Activated CD4-positive, alpha-beta T cell treated with anti-CD3 and anti-CD28 coated beads for 36 hours (primary cell): ENCODE measurements at regions of chrX and their contacts with region 1.

Region 1: DNA sequence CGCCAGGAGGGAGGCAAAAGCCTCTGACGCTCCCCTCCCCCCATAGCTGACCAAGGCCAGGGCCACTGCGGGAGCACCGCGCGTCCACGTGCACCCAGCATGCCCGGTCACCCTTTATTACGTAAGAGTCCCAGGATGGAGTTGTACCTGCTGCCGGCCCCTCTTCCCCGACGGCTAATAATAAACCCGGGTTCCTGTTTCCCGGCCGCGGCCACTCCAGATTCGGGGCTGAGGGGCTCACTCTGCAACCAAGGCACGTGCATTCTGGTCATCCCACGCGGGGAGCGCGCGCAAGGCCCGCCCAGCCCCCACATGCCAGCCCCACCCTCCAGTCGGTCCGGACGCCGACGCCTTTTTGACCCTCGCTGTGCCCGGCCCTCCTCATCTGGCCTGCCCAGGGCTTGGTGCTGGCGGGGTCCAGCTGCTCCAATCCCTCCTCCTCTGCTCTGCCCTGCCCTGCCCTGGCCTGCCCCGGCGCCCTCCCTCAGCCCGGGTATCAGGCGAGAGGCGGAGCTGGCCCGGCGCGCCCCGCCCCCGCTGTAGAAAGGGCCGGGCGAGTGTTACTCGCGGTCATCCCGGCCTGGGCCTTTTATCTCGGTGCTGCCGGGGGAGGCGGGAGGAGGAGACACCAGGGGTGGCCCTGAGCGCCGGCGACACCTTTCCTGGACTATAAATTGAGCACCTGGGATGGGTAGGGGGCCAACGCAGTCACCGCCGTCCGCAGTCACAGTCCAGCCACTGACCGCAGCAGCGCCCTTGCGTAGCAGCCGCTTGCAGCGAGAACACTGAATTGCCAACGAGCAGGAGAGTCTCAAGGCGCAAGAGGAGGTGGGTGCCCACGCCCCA is 2.5 kb downstream of the MID1IP1 start:
- DNase-seq: peak; percentile 87
- ATAC-seq: peak; percentile 68
- H3K4me3 Mint-ChIP-seq: peak overlapping the region; percentile 95
- H3K27ac Mint-ChIP-seq: peak overlapping the region; percentile 96
- H3K4me1 Mint-ChIP-seq: peaks cover 15% of the 10 kb centered on the region
- H3K27me3 Mint-ChIP-seq: no peaks in the 10 kb centered on the region

Region 2: DNA sequence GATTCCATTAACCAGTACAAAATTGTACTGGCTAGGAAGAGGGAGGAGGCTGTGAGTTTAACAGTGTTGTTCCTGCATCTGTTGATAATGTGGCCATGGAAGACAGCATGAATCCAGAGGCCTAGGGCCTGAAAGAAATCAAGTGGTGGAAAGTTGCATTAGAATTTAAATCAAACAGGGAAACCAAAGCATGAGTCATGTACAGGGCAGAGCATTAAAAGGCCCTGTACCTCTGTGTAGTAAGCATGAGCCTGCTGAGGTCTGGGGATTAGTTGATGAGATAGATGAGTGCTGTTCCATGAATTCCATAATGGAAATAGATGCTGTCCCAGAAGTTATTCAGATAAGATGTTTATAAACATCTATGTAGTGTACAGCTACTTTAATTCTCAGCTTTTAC is 55.8 kb after region 1 on chrX:
- CTCF ChIA-PET with region 1: no interaction called
- POLR2A ChIA-PET with region 1: no interaction called
- intact Hi-C with region 1: loop called (anchors 2 to 5 kb)
- DNase-seq: no peak
- ATAC-seq: peak; percentile 63
- H3K4me3 Mint-ChIP-seq: no peak overlapping the region
- H3K27ac Mint-ChIP-seq: no peak overlapping the region
- H3K4me1 Mint-ChIP-seq: peaks cover 6% of the 10 kb centered on the region
- H3K27me3 Mint-ChIP-seq: no peaks in the 10 kb centered on the region

Region 3: DNA sequence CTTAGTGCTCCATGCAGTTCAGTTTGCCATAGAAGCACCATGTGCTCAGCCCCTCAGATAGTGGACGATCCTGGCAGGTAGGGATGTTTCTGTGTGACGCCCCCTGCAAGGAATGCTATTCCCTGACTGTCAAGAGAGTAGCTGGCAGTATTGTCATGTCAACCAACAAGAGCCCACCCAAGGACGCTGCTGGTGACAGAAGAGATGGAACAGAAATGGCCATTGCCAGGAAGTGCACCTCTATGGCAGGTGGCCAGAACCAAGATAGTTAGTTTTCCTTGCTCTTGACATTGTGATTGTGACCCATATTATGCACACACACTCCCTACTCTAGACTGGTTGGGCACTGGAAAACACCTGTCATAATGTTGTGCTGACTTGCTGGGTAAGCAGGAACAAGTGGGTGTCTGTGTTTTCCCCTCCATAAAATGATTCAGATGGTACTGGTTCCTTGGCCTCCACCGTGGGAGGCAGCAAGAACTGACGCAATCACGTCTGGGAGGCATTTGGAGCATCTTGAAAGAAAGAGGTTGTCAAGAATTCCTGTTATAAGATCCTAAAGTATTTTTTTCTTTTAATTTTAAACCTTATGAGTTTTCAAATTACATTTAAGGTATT is 505.3 kb after region 1 on chrX:
- CTCF ChIA-PET with region 1: no interaction called
- POLR2A ChIA-PET with region 1: no interaction called
- intact Hi-C with region 1: loop called (anchors 5 kb)
- DNase-seq: peak; percentile 77
- ATAC-seq: peak; percentile 86
- H3K4me3 Mint-ChIP-seq: peak overlapping the region; percentile 51
- H3K27ac Mint-ChIP-seq: peak overlapping the region; percentile 100
- H3K4me1 Mint-ChIP-seq: peaks cover 77% of the 10 kb centered on the region
- H3K27me3 Mint-ChIP-seq: no peaks in the 10 kb centered on the region

Region 4: GRCh38 chrX:39772057-39772832 is 968.4 kb after region 1 on chrX:
- CTCF ChIA-PET with region 1: no interaction called
- POLR2A ChIA-PET with region 1: no interaction called
- intact Hi-C with region 1: loop called in 1 of 2 experiments (anchors 5 kb)
- DNase-seq: peak; percentile 84
- ATAC-seq: peak; percentile 71
- H3K4me3 Mint-ChIP-seq: peak overlapping the region; percentile 39
- H3K27ac Mint-ChIP-seq: peak overlapping the region; percentile 94
- H3K4me1 Mint-ChIP-seq: peaks cover 42% of the 10 kb centered on the region
- H3K27me3 Mint-ChIP-seq: no peaks in the 10 kb centered on the region

Region 5: DNA sequence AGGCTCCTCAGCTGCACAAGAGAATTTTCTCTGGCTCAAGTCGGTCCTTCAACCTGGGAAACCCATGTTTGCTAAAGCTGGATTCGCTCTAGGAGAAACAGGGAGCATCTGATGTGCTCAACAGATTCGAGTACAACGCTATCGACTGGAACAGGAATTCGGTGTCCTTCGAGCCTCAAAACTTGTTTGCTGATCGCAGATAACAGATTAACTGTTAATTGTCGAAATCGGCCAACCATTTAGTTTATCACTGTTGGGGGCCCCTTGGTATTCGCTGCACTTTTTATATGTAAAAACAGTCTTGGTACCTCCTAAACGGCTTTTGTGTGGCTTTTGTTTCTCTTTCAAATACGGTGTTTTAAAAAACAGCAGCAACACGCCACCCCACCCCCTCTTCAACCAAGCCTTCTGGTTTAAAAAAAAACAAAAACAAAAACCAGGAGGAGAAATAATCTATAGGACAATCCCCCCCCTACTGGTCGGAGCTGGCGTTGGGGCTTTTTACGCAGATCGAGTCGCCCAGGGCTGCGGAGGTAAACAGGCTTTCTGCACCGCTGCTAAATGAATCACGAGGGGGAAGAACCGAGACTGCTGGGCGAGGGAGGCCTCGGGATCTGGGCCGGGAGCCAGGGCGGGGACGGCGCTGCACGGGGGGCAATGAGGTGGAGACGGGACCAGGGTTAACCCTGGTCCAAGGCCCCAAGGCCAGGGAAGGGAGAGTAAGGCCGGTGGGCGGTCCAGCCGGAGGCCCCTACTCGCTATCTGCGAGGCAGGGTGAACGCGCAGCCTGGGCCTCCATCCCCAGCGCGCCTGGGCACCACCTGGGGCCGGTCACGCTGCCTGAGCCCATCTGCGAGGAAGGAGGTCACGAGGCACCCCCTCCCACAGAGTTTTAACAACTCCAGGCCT is 1365.6 kb after region 1 on chrX:
- CTCF ChIA-PET with region 1: no interaction called
- POLR2A ChIA-PET with region 1: no interaction called
- intact Hi-C with region 1: loop called in 1 of 2 experiments (anchors 1 kb)
- DNase-seq: peak; percentile 89
- ATAC-seq: peak; percentile 67
- H3K4me3 Mint-ChIP-seq: peak overlapping the region; percentile 80
- H3K27ac Mint-ChIP-seq: peak overlapping the region; percentile 90
- H3K4me1 Mint-ChIP-seq: peaks cover 37% of the 10 kb centered on the region
- H3K27me3 Mint-ChIP-seq: no peaks in the 10 kb centered on the region

Region 6: GRCh38 chrX:40647307-40648197 is 1843.7 kb after region 1 on chrX and contains the start of gene CXorf38:
- CTCF ChIA-PET with region 1: no interaction called
- POLR2A ChIA-PET with region 1: no interaction called
- intact Hi-C with region 1: loop called in 1 of 2 experiments (anchors 10 kb)
- DNase-seq: peak; percentile 94
- ATAC-seq: peak; percentile 78
- H3K4me3 Mint-ChIP-seq: peak within 1 kb of the TSS; percentile 97
- H3K27ac Mint-ChIP-seq: peak within 1 kb of the TSS; percentile 95
- H3K4me1 Mint-ChIP-seq: peaks cover 23% of the 10 kb centered on the region
- H3K27me3 Mint-ChIP-seq: no peaks in the 10 kb centered on the region
- total RNA-seq, gene CXorf38: 15.8 to 20.5 TPM